Prostate gland (tissue), 2 donors: ENCODE measurements at regions of chr6 and their contacts with region 1.

Region 1: GRCh38 chr6:99467509-99468106 is 42.5 kb upstream of the PNISR start:
- DNase-seq: no peak
- H3K4me3 ChIP-seq: no peak overlapping the region
- H3K27ac ChIP-seq: no peak overlapping the region
- H3K4me1 ChIP-seq: no peaks in the 10 kb centered on the region
- H3K27me3 ChIP-seq: no peaks in the 10 kb centered on the region
- CTCF ChIP-seq: peak; percentile 13 to 67 (median 60)
- POLR2A ChIP-seq: no peak

Region 2: GRCh38 chr6:98984121-98984520 is 483.5 kb before region 1 on chr6:
- intact Hi-C with region 1: no loop called
- DNase-seq: no peak
- H3K4me3 ChIP-seq: no peak overlapping the region
- H3K27ac ChIP-seq: no peak overlapping the region
- H3K4me1 ChIP-seq: no peaks in the 10 kb centered on the region
- H3K27me3 ChIP-seq: no peaks in the 10 kb centered on the region
- CTCF ChIP-seq: no peak
- POLR2A ChIP-seq: no peak

Region 3: DNA sequence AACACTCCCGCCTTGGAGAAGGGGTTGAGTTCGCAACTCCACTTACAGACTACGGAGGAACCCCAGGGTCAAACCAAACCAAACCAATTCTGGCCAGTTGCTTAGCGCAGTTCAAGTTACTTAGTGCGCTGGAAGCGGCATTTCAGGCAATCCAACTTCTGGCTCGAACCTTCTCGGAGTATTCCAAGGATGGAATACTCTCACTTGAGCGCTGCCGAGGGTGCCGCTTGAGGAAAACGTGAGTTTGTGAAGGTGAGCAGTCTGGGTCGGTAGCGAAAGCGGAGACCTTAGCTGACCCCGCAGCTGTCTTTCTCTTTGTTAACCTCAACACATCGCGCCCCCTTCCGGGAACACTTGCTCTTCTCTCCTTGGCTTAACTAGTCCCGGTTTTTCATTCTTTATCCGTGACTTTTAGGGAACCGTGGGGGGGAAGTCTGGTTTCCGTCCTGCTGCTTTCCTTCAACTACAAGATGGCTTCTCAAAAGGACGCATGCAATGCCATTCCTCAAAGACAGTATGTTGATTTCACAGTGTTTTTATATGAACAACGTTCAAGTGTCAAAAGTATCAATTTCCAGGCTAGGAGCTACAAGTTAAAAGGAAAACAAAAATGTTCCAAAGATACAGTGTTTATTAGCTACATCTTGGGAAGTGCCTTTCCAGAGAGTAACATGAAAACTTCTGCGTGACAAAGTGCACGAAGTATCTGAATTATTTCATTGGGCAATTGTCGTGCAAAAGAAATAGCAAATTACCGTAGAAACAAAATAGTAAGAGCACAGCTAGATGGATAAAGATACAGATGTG is 41.8 kb before region 1 on chr6:
- intact Hi-C with region 1: no loop called
- DNase-seq: peak; percentile 70
- H3K4me3 ChIP-seq: peak overlapping the region; percentile 58 to 59
- H3K27ac ChIP-seq: peak overlapping the region; percentile 96 to 98
- H3K4me1 ChIP-seq: no peaks in the 10 kb centered on the region
- H3K27me3 ChIP-seq: no peaks in the 10 kb centered on the region
- CTCF ChIP-seq: peak in 3 of 4 experiments; percentile 36 to 45 (median 45)
- POLR2A ChIP-seq: no peak

Region 4: DNA sequence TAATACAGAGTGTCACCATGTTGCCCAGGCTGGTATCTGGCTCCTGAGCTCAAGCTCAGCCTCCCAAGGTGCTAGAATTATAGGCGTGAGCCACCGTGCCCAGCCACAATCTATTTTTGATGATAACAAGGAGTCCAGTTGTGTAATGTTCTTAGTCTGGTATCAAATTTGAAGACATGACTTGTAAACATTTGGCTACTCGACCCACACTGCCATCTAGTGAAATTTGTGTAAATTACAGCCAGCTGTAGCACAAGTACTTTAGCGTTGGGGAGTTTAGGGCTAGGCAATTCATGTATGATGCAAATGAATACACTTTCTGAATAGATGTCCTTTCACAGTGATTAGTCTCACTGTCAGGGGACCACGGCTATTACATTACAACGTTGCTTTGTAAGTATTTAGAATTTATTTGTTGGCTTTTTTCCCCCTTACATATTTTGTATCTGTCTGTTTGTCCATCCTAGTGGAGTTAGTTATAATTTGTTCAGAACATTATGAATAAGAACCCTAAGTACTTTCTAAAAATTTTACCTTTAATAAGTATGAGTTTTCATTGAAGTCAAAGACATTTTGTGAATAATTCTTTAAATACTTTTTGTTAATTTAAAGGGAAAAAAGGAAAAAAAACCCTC is 278.8 kb after region 1 on chr6:
- intact Hi-C with region 1: loop called (anchors 2 kb)
- DNase-seq: peak; percentile 61
- H3K4me3 ChIP-seq: no peak overlapping the region
- H3K27ac ChIP-seq: no peak overlapping the region
- H3K4me1 ChIP-seq: no peaks in the 10 kb centered on the region
- H3K27me3 ChIP-seq: no peaks in the 10 kb centered on the region
- CTCF ChIP-seq: peak; percentile 45 to 79 (median 74)
- POLR2A ChIP-seq: no peak